Esophagus squamous epithelium (tissue), 5 donors: ENCODE measurements at regions of chr6 and their contacts with region 1.

Region 1: DNA sequence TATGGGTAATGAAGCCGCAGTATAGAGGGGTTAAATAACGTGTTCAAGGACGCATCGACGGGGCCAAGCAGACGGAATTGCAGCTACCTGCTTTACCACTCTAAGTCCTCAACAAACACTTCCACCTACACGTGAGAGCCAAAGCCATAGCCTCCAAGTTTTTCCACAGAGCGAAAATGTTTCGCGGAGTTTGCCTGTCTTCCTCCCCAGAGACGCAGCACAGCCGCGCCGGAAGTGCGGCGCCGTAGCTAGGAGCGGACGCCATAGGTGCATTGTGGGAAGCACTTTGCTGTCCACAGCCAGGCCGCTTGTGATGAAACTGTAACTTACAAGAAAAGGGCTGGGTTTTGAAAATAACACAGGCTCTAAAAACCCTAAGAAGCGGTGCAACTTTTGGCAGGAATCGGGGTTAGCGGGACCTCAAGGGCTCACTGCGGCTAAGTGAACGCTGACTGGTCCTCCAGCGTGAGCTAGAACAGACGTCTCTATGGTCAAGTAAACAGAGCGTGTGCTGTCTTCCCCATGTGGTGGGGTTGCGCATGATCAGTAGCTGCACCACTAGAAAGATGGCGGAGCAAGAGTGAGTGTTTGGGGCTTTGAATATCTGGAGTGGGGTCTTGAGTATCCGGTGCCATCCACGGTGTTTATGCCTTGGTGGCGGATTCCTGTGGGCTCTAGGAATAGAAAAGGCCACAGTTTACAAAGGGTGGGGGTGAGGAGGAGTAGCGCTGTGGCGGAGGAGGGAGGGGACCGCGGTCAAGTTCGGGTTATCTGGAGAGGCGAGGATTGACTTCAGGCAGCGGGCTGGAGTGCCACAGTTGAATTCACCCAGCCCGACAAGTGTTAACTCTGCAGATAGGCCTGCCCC is at the start of gene RPL7L1:
- DNase-seq: peak; percentile 30
- H3K4me3 ChIP-seq: peak within 1 kb of the TSS; percentile 48 to 91 (median 83)
- H3K27ac ChIP-seq: peak within 1 kb of the TSS; percentile 81 to 96 (median 94)
- H3K4me1 ChIP-seq: peaks cover 5 to 47% (median 13%) of the 10 kb centered on the region in 3 donors
- H3K27me3 ChIP-seq: no peaks in the 10 kb centered on the region
- CTCF ChIP-seq: peak in 3 of 6 experiments; percentile 42 to 50 (median 42)
- POLR2A ChIP-seq: peak in 2 of 4 donors; percentile 60 to 67
- total RNA-seq, gene RPL7L1: 67.4 to 122 (median 92.2) TPM

Region 2: GRCh38 chr6:42661540-42662153 is 218.0 kb before region 1 on chr6:
- intact Hi-C with region 1: loop called (anchors 5 kb)
- DNase-seq: peak; percentile 13
- H3K4me3 ChIP-seq: no peak overlapping the region
- H3K27ac ChIP-seq: no peak overlapping the region
- H3K4me1 ChIP-seq: no peaks in the 10 kb centered on the region
- H3K27me3 ChIP-seq: no peaks in the 10 kb centered on the region
- CTCF ChIP-seq: peak; percentile 70 to 93 (median 90)
- POLR2A ChIP-seq: no peak

Region 3: GRCh38 chr6:42726485-42727086 is 153.0 kb before region 1 on chr6:
- intact Hi-C with region 1: loop called (anchors 10 kb)
- DNase-seq: peak; percentile 20
- H3K4me3 ChIP-seq: peak overlapping the region; percentile 24 to 61 (median 53)
- H3K27ac ChIP-seq: peak overlapping the region; percentile 62 to 89 (median 86)
- H3K4me1 ChIP-seq: peaks cover 7 to 25% (median 15%) of the 10 kb centered on the region in 3 donors
- H3K27me3 ChIP-seq: no peaks in the 10 kb centered on the region
- CTCF ChIP-seq: peak; percentile 84 to 97 (median 94)
- POLR2A ChIP-seq: no peak

Region 4: DNA sequence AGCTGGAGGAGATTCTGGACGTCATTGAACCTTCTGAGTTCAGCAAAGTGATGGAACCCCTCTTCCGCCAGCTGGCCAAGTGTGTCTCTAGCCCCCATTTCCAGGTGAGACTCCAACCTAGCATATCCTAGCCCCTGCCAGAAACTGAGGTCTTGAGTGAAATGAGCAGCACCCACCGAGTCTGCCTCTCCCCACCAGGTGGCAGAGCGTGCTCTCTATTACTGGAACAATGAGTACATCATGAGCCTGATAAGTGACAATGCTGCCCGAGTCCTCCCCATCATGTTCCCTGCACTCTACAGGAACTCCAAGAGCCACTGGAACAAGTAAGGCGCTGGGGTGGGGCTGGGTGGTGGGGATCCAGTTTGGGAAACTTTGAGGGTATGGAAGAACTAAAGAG is 129.5 kb after region 1 on chr6:
- intact Hi-C with region 1: no loop called
- DNase-seq: no peak
- H3K4me3 ChIP-seq: no peak overlapping the region
- H3K27ac ChIP-seq: no peak overlapping the region
- H3K4me1 ChIP-seq: peaks cover 10 to 19% (median 14%) of the 10 kb centered on the region in 3 donors
- H3K27me3 ChIP-seq: no peaks in the 10 kb centered on the region
- CTCF ChIP-seq: peak in 3 of 6 experiments; percentile 25 to 56 (median 43)
- POLR2A ChIP-seq: no peak

Region 5: GRCh38 chr6:43421831-43422230 is 542.2 kb after region 1 on chr6:
- intact Hi-C with region 1: no loop called
- DNase-seq: no peak
- H3K4me3 ChIP-seq: no peak overlapping the region
- H3K27ac ChIP-seq: no peak overlapping the region
- H3K4me1 ChIP-seq: peaks cover 0 to 3% (median 0%) of the 10 kb centered on the region in 3 donors
- H3K27me3 ChIP-seq: no peaks in the 10 kb centered on the region
- CTCF ChIP-seq: no peak
- POLR2A ChIP-seq: no peak